Heart right ventricle (tissue), 16 donors: ENCODE measurements at regions of chr15 and their contacts with region 1.

Region 1: DNA sequence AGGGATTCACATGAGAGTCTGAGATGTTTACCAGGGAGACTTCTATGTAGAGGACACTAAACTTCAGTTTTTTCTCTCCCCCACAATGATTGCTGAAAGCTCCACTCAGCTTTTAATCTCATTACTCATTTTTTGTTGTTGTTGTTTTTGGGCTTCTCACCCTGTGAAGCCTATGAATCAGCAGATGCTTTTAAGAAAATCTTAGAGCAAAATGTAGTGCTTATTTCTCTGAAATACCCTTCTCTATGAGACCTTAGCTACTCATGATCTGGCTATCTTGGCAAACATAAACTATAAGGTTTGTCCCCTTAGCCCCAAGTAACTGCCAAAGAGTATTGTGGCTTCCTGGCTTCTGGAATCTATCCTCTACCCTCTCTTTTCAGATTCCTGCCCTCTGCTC is 537.3 kb downstream of the OCA2 start:
- DNase-seq: no peak
- ATAC-seq: no peak
- H3K4me3 ChIP-seq: no peak overlapping the region
- H3K27ac ChIP-seq: no peak overlapping the region
- H3K4me1 ChIP-seq: no peaks in the 10 kb centered on the region
- H3K27me3 ChIP-seq: no peaks in the 10 kb centered on the region
- CTCF ChIP-seq: no peak

Region 2: GRCh38 chr15:27328608-27329007 is 233.2 kb before region 1 on chr15:
- intact Hi-C with region 1: no loop called
- DNase-seq: no peak
- ATAC-seq: no peak
- H3K4me3 ChIP-seq: no peak overlapping the region
- H3K27ac ChIP-seq: no peak overlapping the region
- H3K4me1 ChIP-seq: no peaks in the 10 kb centered on the region
- H3K27me3 ChIP-seq: peaks cover 0 to 3% (median 0%) of the 10 kb centered on the region in 7 donors
- CTCF ChIP-seq: no peak

Region 3: DNA sequence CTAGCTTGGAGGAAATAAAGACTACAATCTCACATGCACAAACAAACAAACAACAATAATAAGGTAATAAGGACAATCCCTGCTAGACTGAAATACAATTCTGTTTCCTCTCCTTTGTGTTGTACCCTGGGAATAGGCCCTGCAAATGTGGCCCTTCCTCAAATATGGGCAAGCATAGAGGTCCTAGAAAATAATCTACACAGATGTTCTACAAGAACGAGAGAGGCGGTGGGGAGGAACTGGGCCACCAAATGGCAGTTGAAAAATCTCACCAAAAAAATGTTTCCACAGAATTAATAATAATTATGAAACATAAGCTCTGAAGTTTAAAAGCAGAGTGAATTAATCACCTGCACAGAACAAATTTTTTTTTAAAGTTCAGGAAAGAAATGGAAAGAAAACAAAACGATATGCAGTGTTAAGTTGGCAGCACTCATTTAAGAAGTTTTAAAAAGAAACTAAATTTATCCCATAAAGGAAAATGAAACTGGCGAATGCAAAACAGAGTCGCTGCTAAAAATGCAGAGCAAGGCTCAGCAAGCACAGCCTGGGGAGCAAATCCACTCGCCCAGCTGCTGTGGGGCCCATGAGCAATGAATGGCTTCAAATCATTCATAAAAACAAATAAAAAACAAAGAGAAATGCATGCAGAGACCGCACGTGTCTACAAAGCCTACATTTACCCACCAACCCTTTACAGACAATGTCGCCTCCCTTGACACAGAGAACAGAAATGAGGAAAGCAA is 61.9 kb after region 1 on chr15:
- intact Hi-C with region 1: loop called in 1 of 10 experiments (anchors 10 kb)
- DNase-seq: no peak
- ATAC-seq: no peak
- H3K4me3 ChIP-seq: no peak overlapping the region
- H3K27ac ChIP-seq: no peak overlapping the region
- H3K4me1 ChIP-seq: no peaks in the 10 kb centered on the region
- H3K27me3 ChIP-seq: no peaks in the 10 kb centered on the region
- CTCF ChIP-seq: no peak